ENCODE measurements at regions of chr4 and their contacts with region 1.

Region 1: DNA sequence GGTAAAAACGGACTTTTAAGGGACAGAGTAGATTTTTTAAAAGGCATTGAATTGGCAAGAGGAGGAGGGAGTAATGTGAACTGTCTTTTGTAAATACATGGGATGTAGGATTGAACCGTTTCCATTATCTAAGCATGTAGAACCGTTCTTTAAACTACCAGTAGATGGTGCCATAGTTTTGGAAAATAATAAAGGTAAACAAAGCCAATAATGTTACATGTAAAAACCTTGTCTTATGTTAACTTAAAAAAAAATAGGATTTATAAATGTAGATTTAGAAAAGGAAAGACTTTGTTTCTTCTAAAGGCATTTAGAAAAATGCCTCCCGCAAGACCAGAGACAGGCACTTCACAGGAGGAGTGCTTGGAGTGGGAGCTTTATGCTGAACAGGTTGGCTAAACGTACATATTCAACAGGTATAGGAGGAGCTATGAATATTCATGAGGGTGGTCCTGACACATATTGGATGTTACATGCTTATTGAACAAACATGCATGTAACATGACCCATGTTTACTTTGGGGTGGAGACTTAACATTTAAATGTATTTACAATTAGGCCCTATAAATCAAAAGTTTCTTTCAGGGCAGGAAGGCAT is 45.5 kb upstream of the FAM241A start:
- DNase-seq: no peak
- H3K4me3 ChIP-seq: no peak overlapping the region
- H3K27ac ChIP-seq: no peak overlapping the region
- H3K4me1 ChIP-seq: no peaks in the 10 kb centered on the region
- H3K27me3 ChIP-seq: no peaks in the 10 kb centered on the region
- CTCF ChIP-seq: peak in 2 of 3 experiments; percentile 39 to 61; a peak in 2 of 4 replicates
- EP300 ChIP-seq: no peak
- POLR2A ChIP-seq: no peak
- RAD21 ChIP-seq: peak; percentile 55 to 69; a peak in 3 of 4 replicates

Region 2: DNA sequence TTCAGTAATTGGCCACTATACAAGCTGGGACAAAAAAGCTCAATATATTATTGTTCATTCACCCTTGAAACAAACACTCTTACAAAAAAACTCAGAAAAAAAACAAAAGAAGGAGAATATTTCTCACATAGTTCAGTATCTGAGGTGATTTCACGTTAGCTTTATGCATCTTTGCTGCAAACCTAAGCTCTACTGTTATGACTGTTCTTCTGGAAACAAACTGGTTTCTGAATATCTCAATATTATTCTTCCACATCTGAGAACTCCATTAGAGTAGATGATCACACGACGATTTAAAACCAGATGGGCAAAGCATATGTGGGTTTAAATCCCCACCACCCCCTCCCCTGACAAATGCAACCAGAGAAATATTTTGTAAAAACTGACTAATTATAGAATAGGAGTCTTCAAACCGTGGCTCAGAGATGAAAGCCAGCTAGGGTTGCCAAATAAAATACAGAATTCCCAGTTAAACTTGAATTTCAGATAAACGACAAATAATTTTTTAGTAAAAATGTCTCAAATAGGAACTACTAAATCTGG is 136.6 kb before region 1 on chr4:
- CTCF ChIA-PET with region 1: no interaction called
- POLR2A ChIA-PET with region 1: no interaction called
- DNase-seq: no peak
- H3K4me3 ChIP-seq: no peak overlapping the region
- H3K27ac ChIP-seq: no peak overlapping the region
- H3K4me1 ChIP-seq: no peaks in the 10 kb centered on the region
- H3K27me3 ChIP-seq: no peaks in the 10 kb centered on the region
- CTCF ChIP-seq: no peak
- EP300 ChIP-seq: no peak
- POLR2A ChIP-seq: no peak
- RAD21 ChIP-seq: no peak

Region 3: GRCh38 chr4:111977419-111977965 is 122.3 kb before region 1 on chr4:
- CTCF ChIA-PET with region 1: no interaction called
- POLR2A ChIA-PET with region 1: no interaction called
- DNase-seq: no peak
- H3K4me3 ChIP-seq: no peak overlapping the region
- H3K27ac ChIP-seq: no peak overlapping the region
- H3K4me1 ChIP-seq: no peaks in the 10 kb centered on the region
- H3K27me3 ChIP-seq: no peaks in the 10 kb centered on the region
- CTCF ChIP-seq: no peak
- EP300 ChIP-seq: no peak
- POLR2A ChIP-seq: no peak
- RAD21 ChIP-seq: no peak

Region 4: GRCh38 chr4:112125416-112125815 is 25.6 kb after region 1 on chr4:
- CTCF ChIA-PET with region 1: interaction called, 12 read pairs
- POLR2A ChIA-PET with region 1: no interaction called
- DNase-seq: no peak
- H3K4me3 ChIP-seq: no peak overlapping the region
- H3K27ac ChIP-seq: no peak overlapping the region
- H3K4me1 ChIP-seq: peaks cover 0 to 12% (median 5%) of the 10 kb centered on the region in 4 experiments; a peak in 3 of 7 replicates
- H3K27me3 ChIP-seq: no peaks in the 10 kb centered on the region
- CTCF ChIP-seq: no peak
- EP300 ChIP-seq: no peak
- POLR2A ChIP-seq: no peak
- RAD21 ChIP-seq: no peak

Region 5: GRCh38 chr4:112145820-112146813 is 46.3 kb after region 1 on chr4:
- CTCF ChIA-PET with region 1: interaction called, 13 read pairs
- POLR2A ChIA-PET with region 1: no interaction called
- DNase-seq: peak in 1 of 2 experiments; percentile 72
- H3K4me3 ChIP-seq: peak overlapping the region; percentile 46 to 91 (median 75)
- H3K27ac ChIP-seq: no peak overlapping the region
- H3K4me1 ChIP-seq: peaks cover 0 to 3% (median 0%) of the 10 kb centered on the region in 4 experiments; a peak in 1 of 7 replicates
- H3K27me3 ChIP-seq: peaks cover 0 to 8% (median under 1%) of the 10 kb centered on the region in 4 experiments; a peak in 4 of 7 replicates
- CTCF ChIP-seq: peak in 2 of 3 experiments; percentile 12 to 33; a peak in 2 of 4 replicates
- EP300 ChIP-seq: no peak
- POLR2A ChIP-seq: no peak
- RAD21 ChIP-seq: peak in 1 of 2 experiments; percentile 3; a peak in 1 of 4 replicates

Region 6: DNA sequence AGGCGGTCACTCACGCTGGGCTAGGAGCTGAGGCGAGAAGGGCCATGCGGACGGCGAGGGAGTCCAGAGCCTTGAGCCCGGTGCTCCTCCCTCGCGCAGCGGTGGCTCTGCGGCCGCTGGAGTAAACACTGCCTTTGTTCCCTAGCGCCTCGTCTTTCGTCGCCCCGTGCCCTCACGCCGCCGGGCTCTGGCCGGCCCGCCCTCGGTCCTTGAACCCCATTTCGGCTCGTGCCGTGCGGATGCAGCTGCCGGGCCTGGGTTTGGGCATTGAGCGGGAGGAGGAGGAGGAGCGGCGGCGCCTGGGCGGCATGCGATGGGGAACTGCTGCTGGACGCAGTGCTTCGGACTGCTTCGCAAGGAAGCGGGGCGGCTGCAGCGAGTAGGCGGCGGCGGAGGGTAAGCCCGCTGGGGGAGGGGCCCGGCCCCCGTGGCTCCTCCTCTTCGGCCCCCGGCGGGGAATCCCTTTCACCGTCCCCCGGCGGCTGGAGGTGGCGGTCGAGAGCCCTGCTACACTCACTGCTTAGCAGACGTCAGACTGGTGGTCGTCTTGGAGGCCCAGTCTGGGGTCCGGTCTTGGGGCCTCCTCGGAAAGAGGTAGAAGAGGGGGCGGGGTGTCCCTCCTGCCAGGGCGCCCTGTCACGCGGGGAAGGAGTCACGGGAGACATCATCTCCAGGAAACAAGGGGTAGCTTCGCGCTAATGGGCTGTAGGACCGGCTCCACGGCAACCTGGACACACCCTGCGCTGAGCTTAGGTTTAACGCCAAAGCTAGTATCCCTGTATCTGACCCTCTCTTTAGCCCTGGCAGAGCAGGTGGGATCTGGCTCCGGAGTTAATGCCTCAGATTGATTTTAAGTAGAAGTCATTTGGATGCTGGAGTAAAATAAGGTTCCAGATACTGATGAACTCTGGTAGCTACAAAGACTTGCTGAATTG is 132.2 kb after region 1 on chr4 and contains the start of gene AP1AR:
- CTCF ChIA-PET with region 1: interaction called, 97 read pairs
- POLR2A ChIA-PET with region 1: interaction called, 5 read pairs
- DNase-seq: peak in 1 of 2 experiments; percentile 93
- H3K4me3 ChIP-seq: peak within 1 kb of the TSS; percentile 72 to 97 (median 90)
- H3K27ac ChIP-seq: peak within 1 kb of the TSS; percentile 98
- H3K4me1 ChIP-seq: peaks cover 0 to 6% (median 0%) of the 10 kb centered on the region in 4 experiments; a peak in 2 of 7 replicates
- H3K27me3 ChIP-seq: no peaks in the 10 kb centered on the region
- CTCF ChIP-seq: peak; percentile 41 to 63 (median 41); a peak in 3 of 4 replicates
- EP300 ChIP-seq: peak in 1 of 2 experiments; percentile 1; a peak in 1 of 3 replicates
- POLR2A ChIP-seq: peak; percentile 97 to 99
- RAD21 ChIP-seq: peak; percentile 15 to 29; a peak in 3 of 4 replicates
- total RNA-seq, gene AP1AR: 26.9 and 27.7 TPM in 2 replicates

Region 7: GRCh38 chr4:112251019-112251643 is 151.3 kb after region 1 on chr4:
- CTCF ChIA-PET with region 1: interaction called, 15 read pairs
- POLR2A ChIA-PET with region 1: no interaction called
- DNase-seq: no peak
- H3K4me3 ChIP-seq: no peak overlapping the region
- H3K27ac ChIP-seq: no peak overlapping the region
- H3K4me1 ChIP-seq: peaks cover 0 to 6% (median 2%) of the 10 kb centered on the region in 4 experiments; a peak in 3 of 7 replicates
- H3K27me3 ChIP-seq: no peaks in the 10 kb centered on the region
- CTCF ChIP-seq: no peak
- EP300 ChIP-seq: no peak
- POLR2A ChIP-seq: no peak
- RAD21 ChIP-seq: no peak

Region 8: DNA sequence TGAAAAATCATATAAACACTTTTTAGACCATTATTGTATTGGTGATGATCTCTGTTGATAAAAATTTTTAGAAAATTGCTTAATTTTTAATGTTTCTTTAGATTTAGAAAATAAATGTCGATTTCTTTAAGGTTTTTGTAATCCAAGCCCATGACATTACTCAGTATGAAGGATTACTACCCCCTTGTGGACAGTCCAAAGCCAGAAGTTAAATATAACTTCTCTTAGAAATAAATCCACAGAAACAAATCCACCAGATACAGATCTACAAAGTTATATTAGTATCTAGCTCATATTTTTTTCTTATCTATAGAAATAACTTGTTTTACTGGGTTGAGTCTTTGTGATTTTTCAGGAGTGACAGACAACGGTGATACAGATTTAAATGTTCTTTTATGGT is 167.0 kb after region 1 on chr4:
- CTCF ChIA-PET with region 1: interaction called, 11 read pairs
- POLR2A ChIA-PET with region 1: no interaction called
- DNase-seq: no peak
- H3K4me3 ChIP-seq: no peak overlapping the region
- H3K27ac ChIP-seq: no peak overlapping the region
- H3K4me1 ChIP-seq: peaks cover 2 to 8% (median 5%) of the 10 kb centered on the region in 4 experiments; a peak in 5 of 7 replicates
- H3K27me3 ChIP-seq: no peaks in the 10 kb centered on the region
- CTCF ChIP-seq: peak in 2 of 3 experiments; percentile 10 to 19; a peak in 2 of 4 replicates
- EP300 ChIP-seq: no peak
- POLR2A ChIP-seq: no peak
- RAD21 ChIP-seq: peak; percentile 30 to 35; a peak in 3 of 4 replicates

Region 9: DNA sequence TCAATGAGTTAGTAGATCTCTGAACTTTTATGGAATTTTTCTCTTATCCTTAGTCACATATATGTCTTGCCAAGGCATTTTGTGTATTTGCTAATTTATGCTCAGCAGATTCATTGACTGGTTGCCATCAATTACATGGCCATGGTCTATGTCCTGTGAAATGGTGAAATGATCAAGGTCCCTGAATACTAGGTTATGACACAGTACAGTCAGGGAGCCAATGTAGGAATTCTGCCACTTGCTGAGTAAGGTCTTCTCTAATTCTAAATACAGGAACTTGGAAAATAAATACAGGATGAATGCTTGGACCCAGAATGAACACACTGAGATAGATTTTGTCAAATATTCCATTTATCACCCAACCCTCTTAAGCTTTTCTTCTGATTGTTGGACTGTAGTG is 232.6 kb after region 1 on chr4:
- CTCF ChIA-PET with region 1: no interaction called
- POLR2A ChIA-PET with region 1: no interaction called
- DNase-seq: no peak
- H3K4me3 ChIP-seq: no peak overlapping the region
- H3K27ac ChIP-seq: no peak overlapping the region
- H3K4me1 ChIP-seq: peaks cover 0 to 2% (median 0%) of the 10 kb centered on the region in 4 experiments; a peak in 1 of 7 replicates
- H3K27me3 ChIP-seq: no peaks in the 10 kb centered on the region; a peak in 2 of 7 replicates
- CTCF ChIP-seq: no peak
- EP300 ChIP-seq: no peak
- POLR2A ChIP-seq: no peak
- RAD21 ChIP-seq: no peak